ENCODE measurements at regions of chr6 and their contacts with region 1.

Region 1: GRCh38 chr6:107657755-107658461 is 166.2 kb downstream of the SCML4 start:
- DNase-seq: no peak
- H3K4me3 ChIP-seq: no peak overlapping the region
- H3K27ac ChIP-seq: no peak overlapping the region
- H3K4me1 ChIP-seq: peaks cover 26% of the 10 kb centered on the region
- H3K27me3 ChIP-seq: no peaks in the 10 kb centered on the region
- CTCF ChIP-seq: no peak

Region 2: GRCh38 chr6:107179004-107179403 is 478.9 kb before region 1 on chr6:
- CTCF ChIA-PET with region 1: no interaction called
- POLR2A ChIA-PET with region 1: no interaction called
- intact Hi-C with region 1: loop called (anchors 5 kb)
- DNase-seq: peak; percentile 29
- H3K4me3 ChIP-seq: no peak overlapping the region
- H3K27ac ChIP-seq: no peak overlapping the region
- H3K4me1 ChIP-seq: no peaks in the 10 kb centered on the region
- H3K27me3 ChIP-seq: no peaks in the 10 kb centered on the region
- CTCF ChIP-seq: peak; percentile 50

Region 3: GRCh38 chr6:107318100-107318736 is 339.7 kb before region 1 on chr6:
- CTCF ChIA-PET with region 1: interaction called, 12 read pairs
- POLR2A ChIA-PET with region 1: no interaction called
- intact Hi-C with region 1: loop called (anchors 2 kb)
- DNase-seq: peak; percentile 67
- H3K4me3 ChIP-seq: no peak overlapping the region
- H3K27ac ChIP-seq: no peak overlapping the region
- H3K4me1 ChIP-seq: no peaks in the 10 kb centered on the region
- H3K27me3 ChIP-seq: no peaks in the 10 kb centered on the region
- CTCF ChIP-seq: peak; percentile 85

Region 4: DNA sequence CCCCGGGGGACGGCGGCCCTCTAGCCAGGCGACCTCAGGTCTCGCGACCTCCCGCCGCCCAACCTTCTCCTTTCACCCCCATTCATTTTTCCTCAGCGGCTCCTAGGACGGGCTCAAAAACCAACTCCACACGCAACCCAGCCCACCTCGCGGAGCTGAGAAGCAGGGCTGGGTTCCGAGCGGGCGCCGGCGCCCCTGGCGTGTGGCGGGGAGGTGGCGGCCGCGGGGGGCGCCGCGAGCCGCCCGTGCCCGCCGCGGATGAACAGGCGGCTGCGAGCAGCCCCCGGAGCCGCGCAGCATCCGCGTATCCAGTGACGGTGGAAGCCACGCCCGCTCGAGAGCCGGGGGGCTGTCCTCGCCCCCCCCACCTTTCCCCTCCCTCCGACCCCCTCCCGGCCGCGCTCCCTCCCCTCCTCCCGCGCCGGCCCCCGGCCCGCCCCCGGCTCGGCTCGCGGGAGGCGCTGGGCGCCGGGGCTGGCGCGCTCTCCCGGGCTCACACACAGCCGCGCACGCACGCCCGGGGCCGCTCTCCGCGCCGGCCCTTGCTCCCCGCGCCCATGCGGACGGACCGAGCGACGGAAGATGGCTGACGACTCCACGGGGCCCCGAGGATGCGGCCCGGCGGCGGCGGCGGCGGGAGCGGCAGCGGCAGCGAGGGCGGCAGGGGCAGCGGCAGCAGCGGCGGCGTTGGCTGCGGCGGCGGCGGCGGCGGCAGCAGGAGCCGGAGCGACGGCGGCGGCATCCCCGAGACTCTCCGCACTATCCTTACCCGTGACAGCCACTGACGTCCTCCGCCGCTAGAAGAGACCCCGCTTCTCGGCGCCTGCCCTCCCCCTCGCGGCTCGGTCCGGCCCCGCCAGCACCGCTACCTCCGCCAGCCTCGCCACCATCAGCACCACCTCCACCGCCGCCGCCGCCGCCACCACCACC is 168.0 kb before region 1 on chr6 and contains the start of gene SOBP:
- CTCF ChIA-PET with region 1: no interaction called
- POLR2A ChIA-PET with region 1: no interaction called
- intact Hi-C with region 1: loop called (anchors 10 kb)
- DNase-seq: peak; percentile 63
- H3K4me3 ChIP-seq: peak within 1 kb of the TSS; percentile 68
- H3K27ac ChIP-seq: no peak within 1 kb of the TSS
- H3K4me1 ChIP-seq: peaks cover 14% of the 10 kb centered on the region
- H3K27me3 ChIP-seq: peaks cover 38% of the 10 kb centered on the region
- CTCF ChIP-seq: no peak
- total RNA-seq, gene SOBP: 3.3 TPM in 2 replicates

Measured in A673 (cell line).